ENCODE measurements at regions of chr14 and their contacts with region 1.

Region 1: GRCh38 chr14:36941783-36942521 is 230.5 kb downstream of the SLC25A21 start:
- DNase-seq: peak; percentile 47 to 72
- H3K4me3 ChIP-seq: no peak overlapping the region
- H3K27ac ChIP-seq: no peak overlapping the region
- H3K4me1 ChIP-seq: peaks cover 12% of the 10 kb centered on the region
- H3K27me3 ChIP-seq: no peaks in the 10 kb centered on the region
- CTCF ChIP-seq: peak; percentile 92

Region 2: GRCh38 chr14:36619131-36619530 is 322.8 kb before region 1 on chr14:
- CTCF ChIA-PET with region 1: interaction called, 19 read pairs
- POLR2A ChIA-PET with region 1: no interaction called
- intact Hi-C with region 1: no loop called
- DNase-seq: no peak
- H3K4me3 ChIP-seq: no peak overlapping the region
- H3K27ac ChIP-seq: no peak overlapping the region
- H3K4me1 ChIP-seq: no peaks in the 10 kb centered on the region
- H3K27me3 ChIP-seq: no peaks in the 10 kb centered on the region
- CTCF ChIP-seq: no peak

Region 3: GRCh38 chr14:36661756-36662498 is 280.0 kb before region 1 on chr14 and contains the start of gene PAX9:
- CTCF ChIA-PET with region 1: interaction called, 6 read pairs
- POLR2A ChIA-PET with region 1: no interaction called
- intact Hi-C with region 1: loop called (anchors 5 kb)
- DNase-seq: peak; percentile 75 to 89
- H3K4me3 ChIP-seq: peak within 1 kb of the TSS; percentile 85
- H3K27ac ChIP-seq: no peak within 1 kb of the TSS
- H3K4me1 ChIP-seq: no peaks in the 10 kb centered on the region
- H3K27me3 ChIP-seq: no peaks in the 10 kb centered on the region
- CTCF ChIP-seq: no peak
- total RNA-seq, gene PAX9: 7.6 and 8.5 TPM in 2 replicates

Region 4: DNA sequence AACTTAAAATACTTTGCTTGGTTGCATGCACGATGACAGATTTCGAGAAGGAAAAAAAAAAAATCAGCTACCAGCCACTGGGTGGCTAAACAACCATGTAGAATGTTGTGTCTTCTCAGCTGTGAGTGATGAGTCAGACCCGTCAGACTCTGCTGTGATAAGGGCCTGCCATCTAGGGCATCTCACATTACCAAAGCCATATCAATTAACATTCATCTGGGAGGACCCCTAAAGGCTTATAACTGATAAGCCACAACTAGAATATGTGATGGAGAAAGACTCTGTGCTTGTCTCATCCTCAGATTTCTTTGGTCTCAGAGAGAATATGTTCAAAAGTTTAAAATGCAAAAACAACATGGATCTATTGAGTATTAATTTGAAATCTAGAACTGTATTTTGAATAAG is 168.8 kb before region 1 on chr14:
- CTCF ChIA-PET with region 1: interaction called, 3 read pairs
- POLR2A ChIA-PET with region 1: no interaction called
- intact Hi-C with region 1: loop called (anchors 5 kb)
- DNase-seq: peak; percentile 18 to 57
- H3K4me3 ChIP-seq: no peak overlapping the region
- H3K27ac ChIP-seq: no peak overlapping the region
- H3K4me1 ChIP-seq: peaks cover 47% of the 10 kb centered on the region
- H3K27me3 ChIP-seq: no peaks in the 10 kb centered on the region
- CTCF ChIP-seq: peak; percentile 28; the same call in 1 of the 2 replicates

Region 5: GRCh38 chr14:36915081-36915480 is 26.9 kb before region 1 on chr14:
- CTCF ChIA-PET with region 1: no interaction called
- POLR2A ChIA-PET with region 1: no interaction called
- intact Hi-C with region 1: no loop called
- DNase-seq: no peak
- H3K4me3 ChIP-seq: no peak overlapping the region
- H3K27ac ChIP-seq: no peak overlapping the region
- H3K4me1 ChIP-seq: no peaks in the 10 kb centered on the region
- H3K27me3 ChIP-seq: no peaks in the 10 kb centered on the region
- CTCF ChIP-seq: no peak

Region 6: DNA sequence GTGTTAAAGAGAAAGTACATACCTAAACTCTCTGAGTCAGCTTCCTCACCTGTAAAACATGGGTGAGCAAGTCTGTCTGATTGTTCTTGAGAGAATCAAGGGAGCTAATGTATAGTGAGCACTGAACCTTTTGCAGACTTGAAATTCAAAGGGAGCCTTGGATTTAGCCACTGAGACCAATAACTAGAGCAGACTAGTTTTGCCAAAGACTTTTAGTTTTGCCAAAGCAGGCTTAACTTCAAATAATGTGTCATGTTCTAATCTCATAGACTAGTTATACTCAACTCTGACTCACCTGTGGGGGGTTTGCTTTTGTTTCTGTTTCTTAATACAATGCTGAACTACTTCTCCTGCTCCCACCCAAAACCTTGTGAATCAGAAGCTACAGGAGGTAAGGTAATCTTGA is 106.7 kb after region 1 on chr14:
- CTCF ChIA-PET with region 1: no interaction called
- POLR2A ChIA-PET with region 1: no interaction called
- intact Hi-C with region 1: loop called (anchors 10 kb)
- DNase-seq: peak in 1 of 2 experiments; percentile 52
- H3K4me3 ChIP-seq: no peak overlapping the region
- H3K27ac ChIP-seq: peak overlapping the region; percentile 61
- H3K4me1 ChIP-seq: peaks cover 16% of the 10 kb centered on the region
- H3K27me3 ChIP-seq: no peaks in the 10 kb centered on the region
- CTCF ChIP-seq: no peak

Region 7: GRCh38 chr14:37150414-37150813 is 208.5 kb after region 1 on chr14:
- CTCF ChIA-PET with region 1: no interaction called
- POLR2A ChIA-PET with region 1: no interaction called
- intact Hi-C with region 1: loop called (anchors 2 kb)
- DNase-seq: no peak
- H3K4me3 ChIP-seq: no peak overlapping the region
- H3K27ac ChIP-seq: no peak overlapping the region
- H3K4me1 ChIP-seq: no peaks in the 10 kb centered on the region
- H3K27me3 ChIP-seq: no peaks in the 10 kb centered on the region
- CTCF ChIP-seq: peak; percentile 79